ENCODE measurements at regions of chr10 and their contacts with region 1.

Region 1: DNA sequence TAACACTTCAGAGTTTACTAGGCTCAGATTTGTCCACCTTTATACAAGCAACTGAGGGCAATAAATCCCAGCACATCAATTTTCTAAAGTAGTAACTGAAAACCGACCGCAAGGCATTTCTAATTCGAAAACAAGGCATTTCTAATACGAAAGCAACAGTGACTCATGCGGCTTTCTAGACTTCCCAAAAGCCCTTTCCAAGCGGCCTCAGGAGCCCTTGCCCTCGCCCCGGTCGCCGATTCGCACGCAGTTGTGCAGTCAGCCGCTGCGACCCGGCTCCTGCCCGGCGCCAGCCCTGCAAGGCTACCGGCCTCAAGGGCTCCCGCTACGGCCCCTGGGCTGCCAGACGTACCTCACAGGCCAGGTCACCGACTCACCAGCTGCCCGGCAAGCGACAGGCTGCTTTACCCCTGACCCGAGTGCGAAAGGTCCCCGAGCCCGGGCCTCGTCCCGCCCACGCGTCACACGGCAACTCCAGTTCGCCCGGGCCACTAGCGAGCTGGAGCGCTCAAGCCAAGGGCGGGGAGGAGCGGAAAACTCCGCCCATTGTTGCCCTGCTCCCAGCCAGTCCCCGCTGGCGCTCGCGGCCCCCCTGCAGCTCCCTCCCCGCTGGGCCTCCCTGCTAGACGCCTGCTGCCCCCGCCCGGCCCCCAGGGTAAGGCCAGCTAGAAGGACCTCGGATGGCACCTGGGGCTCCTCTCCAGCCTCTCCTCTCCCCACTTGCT is 7.3 kb downstream of the NCOA4 start:
- DNase-seq: peak; percentile 95
- H3K4me3 ChIP-seq: peak overlapping the region; percentile 12 to 65 (median 52)
- H3K27ac ChIP-seq: peak overlapping the region; percentile 65
- H3K4me1 ChIP-seq: peaks cover 48% of the 10 kb centered on the region
- H3K27me3 ChIP-seq: no peaks in the 10 kb centered on the region
- CTCF ChIP-seq: peak in 1 of 2 donors; percentile 53
- POLR2A ChIP-seq: no peak

Region 2: DNA sequence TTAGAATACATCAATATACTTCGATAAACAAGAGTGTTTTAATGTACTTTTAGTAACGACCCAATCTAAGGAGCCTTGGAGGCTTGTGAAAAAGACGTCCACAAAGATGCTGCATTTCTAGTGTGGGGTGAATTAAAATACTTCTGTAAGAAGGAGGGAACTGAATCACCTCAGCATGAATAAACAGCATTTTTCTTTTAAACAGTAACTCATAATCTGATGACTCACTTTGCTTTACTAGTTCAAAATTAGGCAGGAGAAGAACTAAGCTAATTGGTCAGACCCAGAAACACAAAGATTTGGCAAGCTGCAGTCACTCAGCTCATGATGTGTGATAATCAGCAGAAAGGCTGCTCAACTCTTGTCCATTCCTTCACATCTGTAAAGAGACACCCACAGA is 16.9 kb before region 1 on chr10:
- CTCF ChIA-PET with region 1: interaction called, 18 read pairs
- POLR2A ChIA-PET with region 1: no interaction called
- dilution Hi-C with region 1: no loop called
- intact Hi-C with region 1: no loop called
- DNase-seq: peak; percentile 18
- H3K4me3 ChIP-seq: no peak overlapping the region
- H3K27ac ChIP-seq: peak overlapping the region; percentile 3
- H3K4me1 ChIP-seq: peaks cover 6% of the 10 kb centered on the region
- H3K27me3 ChIP-seq: no peaks in the 10 kb centered on the region
- CTCF ChIP-seq: no peak
- POLR2A ChIP-seq: no peak

Measured in endothelial cell of umbilical vein (primary cell).